Activated T-helper 1 cell treated with anti-CD3 and anti-CD28 coated beads, Interleukin-12 subunit alpha, Interleukin-12 subunit beta, Interleukin-2, Interleukin-4 antibody, amounts not matched to agents 30 ng/mL and 10 ng/mL and 1 ng/mL, durations not matched to agents 14 hours and 24 hours and 36 hours (primary cell): ENCODE measurements at regions of chr4 and their contacts with region 1.

Region 1: GRCh38 chr4:153488006-153488891 is 22.1 kb downstream of the TMEM131L start:
- DNase-seq: peak; percentile 66
- H3K4me3 Mint-ChIP-seq: peak overlapping the region; percentile 71
- H3K27ac Mint-ChIP-seq: peak overlapping the region; percentile 93
- H3K4me1 Mint-ChIP-seq: peaks cover 76% of the 10 kb centered on the region
- H3K27me3 Mint-ChIP-seq: no peaks in the 10 kb centered on the region

Region 2: DNA sequence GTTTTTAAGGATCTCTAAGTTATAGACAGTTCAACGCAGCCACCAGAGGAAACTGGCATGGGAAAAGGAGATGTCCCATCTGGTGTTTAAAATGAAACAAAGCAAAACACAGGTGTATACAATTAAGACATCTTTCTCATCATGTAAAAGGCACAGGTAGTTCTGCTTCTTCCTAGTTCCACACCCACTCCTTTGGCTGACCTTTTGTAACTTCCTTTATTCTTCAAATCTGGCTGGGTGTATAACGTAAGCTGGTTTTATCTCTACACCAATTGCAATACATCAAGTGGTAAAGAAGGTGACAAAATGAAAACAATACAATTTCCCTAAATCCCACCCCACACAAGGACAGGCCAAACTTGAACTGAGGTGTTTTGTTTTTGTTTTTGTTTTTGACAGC is 925.0 kb before region 1 on chr4:
- intact Hi-C with region 1: no loop called
- DNase-seq: no peak
- H3K4me3 Mint-ChIP-seq: no peak overlapping the region
- H3K27ac Mint-ChIP-seq: no peak overlapping the region
- H3K4me1 Mint-ChIP-seq: peaks cover 9% of the 10 kb centered on the region
- H3K27me3 Mint-ChIP-seq: no peaks in the 10 kb centered on the region

Region 3: DNA sequence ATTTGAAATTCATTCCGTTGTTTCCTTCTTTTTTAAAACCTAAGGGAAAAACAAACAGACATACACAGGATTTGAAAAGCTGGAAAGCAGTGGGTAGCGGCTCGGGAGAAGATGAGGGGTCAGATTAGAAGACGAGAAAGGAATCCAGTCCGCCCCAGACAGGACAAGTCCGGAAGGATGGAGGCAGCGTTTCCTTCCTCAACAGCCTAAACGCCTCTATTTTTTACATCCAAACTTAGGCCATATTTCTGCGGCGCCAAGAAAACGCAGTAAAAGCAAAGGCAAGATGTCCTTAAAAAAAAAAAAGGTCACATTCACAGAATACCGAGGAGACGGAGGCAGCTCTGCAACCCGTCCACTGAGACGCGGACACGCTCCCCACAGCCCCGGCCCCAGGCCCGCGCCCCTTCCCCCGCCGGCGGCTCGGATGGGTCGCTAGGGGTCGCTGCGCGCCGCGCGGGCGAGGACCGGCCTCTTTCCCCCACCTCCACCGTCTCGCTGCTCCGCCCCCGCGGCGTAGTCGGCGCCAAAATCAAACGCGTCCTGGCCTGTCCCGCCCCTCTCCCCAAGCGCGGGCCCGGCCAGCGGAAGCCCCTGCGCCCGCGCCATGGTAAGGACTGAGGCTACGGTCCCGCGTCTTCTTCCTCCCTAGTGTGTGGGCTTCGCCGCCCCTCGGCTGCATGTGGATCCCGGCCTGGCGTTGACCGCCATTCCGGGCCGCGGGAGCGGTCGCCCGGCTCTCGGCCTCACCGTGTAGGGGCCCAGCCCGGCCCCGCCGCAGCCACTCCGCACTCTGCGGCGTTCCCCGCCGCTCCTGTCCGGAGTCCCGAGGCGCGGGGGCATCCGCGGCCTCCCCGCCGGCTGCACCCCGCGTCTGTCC is 143.9 kb before region 1 on chr4 and contains the start of gene MND1:
- intact Hi-C with region 1: loop called (anchors 1 kb)
- DNase-seq: peak; percentile 90
- H3K4me3 Mint-ChIP-seq: peak within 1 kb of the TSS; percentile 91
- H3K27ac Mint-ChIP-seq: peak within 1 kb of the TSS; percentile 85
- H3K4me1 Mint-ChIP-seq: peaks cover 32% of the 10 kb centered on the region
- H3K27me3 Mint-ChIP-seq: peaks cover 13% of the 10 kb centered on the region
- total RNA-seq, gene MND1: 12.5 and 13.5 TPM in 2 replicates

Region 4: DNA sequence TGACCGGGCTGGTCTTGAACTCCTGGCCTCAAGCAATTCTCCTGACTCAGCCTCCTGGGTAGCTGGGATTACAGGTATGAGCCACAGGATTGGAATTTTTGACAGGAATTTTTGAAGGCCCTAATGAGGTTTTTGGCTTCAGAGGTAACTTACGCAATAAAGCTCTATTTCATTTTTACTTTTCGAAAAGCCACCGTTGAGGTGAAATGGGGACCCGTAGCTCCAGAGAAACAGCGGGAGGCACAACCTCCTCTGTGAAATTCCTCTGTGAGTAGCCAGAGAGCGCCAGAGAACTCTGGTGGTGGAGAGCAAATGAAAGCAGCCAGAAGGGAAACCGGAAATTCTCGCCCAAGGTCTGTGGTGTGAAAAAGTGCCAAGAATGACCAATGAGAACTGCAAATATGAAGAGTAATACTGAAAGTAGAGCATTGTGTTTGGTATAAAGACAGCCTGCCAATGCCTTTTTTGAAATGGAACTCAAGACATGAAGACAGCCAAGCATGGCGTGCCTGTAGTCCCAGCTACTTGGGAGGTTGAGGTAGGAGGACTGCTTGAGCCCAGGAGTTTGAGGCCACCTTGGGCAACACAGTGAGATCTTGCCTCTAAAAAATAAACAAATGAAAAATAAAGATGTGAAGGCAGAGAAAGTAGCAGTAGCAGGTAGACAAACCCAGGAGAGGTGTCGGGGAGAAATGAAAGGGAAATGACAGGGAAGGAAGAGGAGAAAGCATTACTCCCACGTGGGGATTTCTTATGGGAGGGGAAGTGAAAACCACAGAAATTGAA is 55.1 kb before region 1 on chr4:
- intact Hi-C with region 1: loop called (anchors 1 kb)
- DNase-seq: peak; percentile 68
- H3K4me3 Mint-ChIP-seq: peak overlapping the region; percentile 76
- H3K27ac Mint-ChIP-seq: peak overlapping the region; percentile 87
- H3K4me1 Mint-ChIP-seq: peaks cover 46% of the 10 kb centered on the region
- H3K27me3 Mint-ChIP-seq: peaks cover 4% of the 10 kb centered on the region

Region 5: DNA sequence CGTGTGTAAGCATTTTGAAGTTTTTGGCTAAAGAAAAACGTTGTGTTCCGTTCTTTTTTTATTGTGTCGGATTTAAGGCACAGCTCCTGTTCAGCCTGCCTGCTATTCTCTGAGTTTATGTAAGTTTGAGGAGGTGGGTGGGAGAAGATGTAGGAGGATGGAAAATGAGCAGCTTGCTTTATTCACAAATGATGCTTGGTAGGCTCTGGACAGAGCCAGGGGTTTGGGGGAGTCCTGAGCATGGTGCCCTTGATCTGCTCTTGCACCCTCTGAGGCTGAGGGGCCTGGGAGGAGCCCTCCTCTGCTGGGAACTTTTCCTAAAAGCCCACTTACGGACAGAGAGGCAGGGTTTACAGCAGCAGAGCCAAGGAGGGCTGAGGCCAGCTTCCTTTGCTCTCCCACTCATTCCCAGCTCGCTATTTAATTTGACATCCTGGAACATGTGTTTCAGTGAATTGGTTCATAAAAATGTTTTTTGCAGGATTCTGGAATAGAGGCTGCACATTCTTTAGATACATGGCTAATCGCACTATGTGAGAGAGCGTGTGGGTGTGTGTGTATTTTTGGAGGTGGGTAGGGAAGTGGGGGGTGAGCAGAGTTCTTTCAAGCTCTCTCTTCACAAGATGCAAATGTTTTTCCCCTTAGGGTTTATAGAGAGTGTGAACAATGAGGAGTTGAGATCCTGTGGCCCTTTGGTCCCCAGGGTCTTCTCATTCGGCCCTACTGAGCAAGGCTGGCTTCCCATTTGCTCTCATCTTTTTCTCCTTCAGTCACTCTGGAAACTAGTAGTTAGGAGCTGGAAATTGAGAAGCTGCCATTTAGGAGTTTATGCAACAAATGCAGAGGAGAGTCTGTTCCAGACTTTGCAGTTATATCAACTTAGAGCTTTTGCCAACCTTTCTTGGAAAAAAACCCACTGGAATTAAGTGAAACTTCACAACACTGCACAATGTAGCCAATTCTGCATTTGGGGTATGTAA is 10.0 kb after region 1 on chr4:
- intact Hi-C with region 1: loop called (anchors 1 kb)
- DNase-seq: no peak
- H3K4me3 Mint-ChIP-seq: peak overlapping the region; percentile 79
- H3K27ac Mint-ChIP-seq: peak overlapping the region; percentile 90
- H3K4me1 Mint-ChIP-seq: peaks cover 89% of the 10 kb centered on the region
- H3K27me3 Mint-ChIP-seq: no peaks in the 10 kb centered on the region

Region 6: DNA sequence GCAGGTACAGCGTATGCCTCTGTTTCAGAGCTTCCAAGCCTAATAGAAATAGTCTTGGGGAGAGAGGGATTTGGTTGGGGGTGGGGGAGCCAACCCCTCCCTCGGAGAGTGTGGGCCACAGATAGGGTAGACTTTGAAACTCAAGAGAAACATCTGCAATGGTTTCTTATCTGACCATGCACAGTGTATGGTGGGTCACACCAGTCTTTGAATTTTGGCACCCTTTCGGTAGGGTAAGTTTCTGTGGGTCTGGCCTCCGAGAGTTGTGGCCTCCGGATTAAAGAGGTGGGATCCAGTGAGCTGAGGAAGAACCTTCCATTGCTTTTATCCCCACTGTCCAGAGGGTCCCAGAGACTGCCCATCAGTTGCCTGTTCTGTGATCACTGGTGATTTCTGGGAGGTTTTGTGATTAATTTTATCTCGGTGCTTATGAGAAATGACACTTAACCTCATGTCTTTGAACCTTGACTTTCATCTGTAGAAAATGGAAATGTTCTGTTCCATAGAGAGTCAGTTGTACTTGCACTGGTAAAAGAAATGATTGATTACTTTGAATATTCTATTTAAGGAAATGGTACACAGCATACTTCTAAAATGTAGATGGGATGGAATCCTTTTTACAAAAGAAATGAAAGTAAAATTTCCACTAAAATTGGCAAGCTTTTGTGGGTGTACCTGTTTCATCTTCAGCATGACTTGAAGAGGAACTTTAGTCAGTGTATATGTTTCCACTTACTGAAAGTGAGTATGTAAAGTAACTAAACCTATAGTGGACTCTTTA is 40.6 kb after region 1 on chr4:
- intact Hi-C with region 1: loop called (anchors 1 kb)
- DNase-seq: no peak
- H3K4me3 Mint-ChIP-seq: peak overlapping the region; percentile 71
- H3K27ac Mint-ChIP-seq: peak overlapping the region; percentile 93
- H3K4me1 Mint-ChIP-seq: peaks cover 66% of the 10 kb centered on the region
- H3K27me3 Mint-ChIP-seq: no peaks in the 10 kb centered on the region

Region 7: DNA sequence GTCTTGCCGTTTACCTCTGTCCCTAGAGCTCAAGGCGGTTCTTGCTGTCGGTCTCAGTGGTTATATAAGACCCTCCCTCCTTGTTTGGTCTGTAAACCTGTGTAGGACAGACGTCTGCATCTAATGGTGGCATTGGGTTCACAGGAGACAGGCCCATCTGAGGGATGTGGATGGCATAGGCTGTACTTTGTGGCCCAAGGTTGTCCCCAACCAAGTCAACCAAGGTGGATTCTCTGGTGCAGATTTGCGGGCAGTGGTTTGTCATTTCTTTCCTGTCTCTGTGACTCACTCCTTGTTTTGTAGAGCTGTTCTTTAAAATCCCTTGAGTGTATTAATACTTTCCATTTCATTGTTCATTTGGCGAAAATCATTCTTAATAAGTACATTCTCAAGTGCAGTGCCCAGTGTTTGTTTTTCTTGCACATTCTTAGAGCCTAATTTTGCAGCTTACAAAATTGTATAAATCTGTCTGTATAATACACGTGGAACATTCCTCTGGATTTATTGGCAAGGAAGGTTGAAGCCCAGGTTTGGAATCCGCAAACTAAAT is 127.8 kb after region 1 on chr4:
- intact Hi-C with region 1: loop called (anchors 5 kb)
- DNase-seq: peak; percentile 16
- H3K4me3 Mint-ChIP-seq: no peak overlapping the region
- H3K27ac Mint-ChIP-seq: peak overlapping the region; percentile 29
- H3K4me1 Mint-ChIP-seq: peaks cover 26% of the 10 kb centered on the region
- H3K27me3 Mint-ChIP-seq: no peaks in the 10 kb centered on the region